ENCODE measurements at regions of chr1 and their contacts with region 1.

Region 1: GRCh38 chr1:60425528-60425927 is 352.0 kb upstream of the C1orf87 start:
- DNase-seq: peak; percentile 13
- H3K4me3 ChIP-seq: no peak overlapping the region
- H3K27ac ChIP-seq: no peak overlapping the region
- H3K4me1 ChIP-seq: peaks cover 12% of the 10 kb centered on the region
- H3K27me3 ChIP-seq: no peaks in the 10 kb centered on the region
- CTCF ChIP-seq: peak; percentile 34 to 53
- POLR2A ChIP-seq: no peak

Region 2: DNA sequence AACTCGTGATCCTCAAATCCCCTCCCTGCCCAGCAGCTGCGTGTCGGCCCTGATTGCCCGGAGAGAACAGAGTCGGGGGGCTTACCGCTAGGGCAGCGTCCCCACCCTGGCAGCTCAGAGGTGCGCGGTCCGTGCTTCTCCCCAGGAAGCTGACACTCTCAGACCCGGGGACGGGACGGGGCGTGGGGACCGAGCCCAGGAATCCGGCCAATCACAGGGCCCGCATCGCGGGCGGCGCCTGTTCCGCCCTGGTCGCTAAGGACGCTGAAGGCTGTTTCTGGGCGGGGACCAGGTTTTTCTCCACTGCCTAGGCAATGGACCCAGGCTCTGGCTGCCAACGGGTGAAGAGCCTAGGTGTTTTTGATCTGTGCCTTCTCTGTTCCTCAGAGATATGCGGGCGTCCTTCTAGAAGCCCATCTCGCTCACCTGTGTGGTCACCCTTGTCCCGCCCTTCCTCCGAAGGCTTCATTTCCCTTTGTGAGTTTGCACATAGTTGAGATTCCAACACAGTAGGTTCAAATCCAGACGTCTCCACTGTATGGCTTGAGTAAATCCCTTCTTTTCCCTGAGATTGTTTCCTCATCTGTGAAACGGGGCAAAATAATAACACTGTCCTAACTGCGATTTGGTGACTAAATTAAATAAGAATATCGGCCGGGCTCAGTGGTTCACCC is 351.8 kb before region 1 on chr1 and contains the start of gene C1orf87:
- CTCF ChIA-PET with region 1: no interaction called
- POLR2A ChIA-PET with region 1: no interaction called
- dilution Hi-C with region 1: no loop called
- intact Hi-C with region 1: no loop called
- DNase-seq: no peak
- H3K4me3 ChIP-seq: no peak within 1 kb of the TSS
- H3K27ac ChIP-seq: no peak within 1 kb of the TSS
- H3K4me1 ChIP-seq: no peaks in the 10 kb centered on the region
- H3K27me3 ChIP-seq: peaks cover 21 to 24% of the 10 kb centered on the region in 2 experiments
- CTCF ChIP-seq: no peak
- POLR2A ChIP-seq: no peak
- total RNA-seq, gene C1orf87: not detected in 2 replicates

Region 3: GRCh38 chr1:60436186-60436585 is 10.7 kb after region 1 on chr1:
- CTCF ChIA-PET with region 1: interaction called, 11 read pairs
- POLR2A ChIA-PET with region 1: no interaction called
- dilution Hi-C with region 1: no loop called
- intact Hi-C with region 1: no loop called
- DNase-seq: no peak
- H3K4me3 ChIP-seq: no peak overlapping the region
- H3K27ac ChIP-seq: no peak overlapping the region
- H3K4me1 ChIP-seq: no peaks in the 10 kb centered on the region
- H3K27me3 ChIP-seq: no peaks in the 10 kb centered on the region
- CTCF ChIP-seq: no peak
- POLR2A ChIP-seq: no peak

Region 4: DNA sequence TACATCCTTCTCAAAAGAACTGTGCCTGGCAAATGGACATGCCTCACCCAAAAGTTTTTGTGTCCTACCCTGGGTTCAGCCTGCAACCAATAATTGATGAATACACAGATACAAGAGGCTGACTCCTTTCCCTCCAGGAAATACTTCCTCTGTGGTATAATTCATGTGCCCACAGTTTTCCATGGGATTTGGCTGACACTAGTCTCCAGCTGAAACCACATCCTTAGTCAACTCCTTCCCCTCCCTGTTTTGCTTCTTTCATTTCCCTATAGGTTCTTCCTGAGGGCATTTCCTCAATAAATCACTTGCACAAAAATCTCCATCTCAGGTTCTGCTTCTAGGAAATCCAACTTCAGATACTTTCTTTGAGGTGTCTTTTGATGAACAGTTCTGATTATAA is 84.6 kb after region 1 on chr1:
- CTCF ChIA-PET with region 1: no interaction called
- POLR2A ChIA-PET with region 1: no interaction called
- dilution Hi-C with region 1: no loop called
- intact Hi-C with region 1: loop called (anchors 5 kb)
- DNase-seq: peak; percentile 89
- H3K4me3 ChIP-seq: no peak overlapping the region
- H3K27ac ChIP-seq: peak overlapping the region; percentile 13
- H3K4me1 ChIP-seq: peaks cover 28% of the 10 kb centered on the region
- H3K27me3 ChIP-seq: no peaks in the 10 kb centered on the region
- CTCF ChIP-seq: no peak
- POLR2A ChIP-seq: peak; percentile 79

Region 5: DNA sequence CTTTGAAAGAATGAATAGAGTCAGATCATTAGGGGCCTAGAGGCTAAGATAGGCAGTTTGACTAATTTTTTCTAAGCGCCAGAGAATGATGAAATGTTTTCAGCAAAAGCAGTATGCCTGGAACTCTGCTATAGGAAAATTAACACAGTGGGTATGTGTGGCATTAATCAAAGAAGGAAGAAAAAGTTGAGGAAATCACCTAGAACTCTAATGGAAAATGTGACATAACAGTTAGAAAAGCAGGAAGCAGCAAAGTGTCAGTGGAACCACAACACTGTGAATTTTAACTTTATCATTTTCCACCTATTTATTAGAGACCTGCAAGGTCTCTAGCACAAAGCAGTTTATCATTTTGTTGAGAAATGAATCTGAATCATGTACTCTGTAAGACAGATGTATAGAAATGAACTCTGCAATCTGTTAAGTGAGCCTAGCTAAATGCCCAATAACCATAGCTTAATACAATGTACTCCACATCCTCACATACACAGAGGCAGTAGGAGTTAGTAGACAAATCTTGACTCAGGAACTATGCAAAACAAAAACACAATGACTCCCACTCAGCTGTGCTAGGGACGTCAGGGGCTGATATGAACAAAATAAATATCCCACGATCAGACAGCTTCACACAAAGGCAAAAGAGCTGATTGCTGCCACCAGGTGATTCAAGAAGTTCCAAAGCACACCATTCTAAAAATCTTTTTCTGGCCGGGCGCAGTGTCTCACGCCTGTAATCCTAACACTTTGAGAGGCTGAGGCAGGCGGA is 156.1 kb after region 1 on chr1:
- CTCF ChIA-PET with region 1: no interaction called
- POLR2A ChIA-PET with region 1: no interaction called
- dilution Hi-C with region 1: no loop called
- intact Hi-C with region 1: loop called (anchors 5 kb)
- DNase-seq: peak; percentile 69
- H3K4me3 ChIP-seq: no peak overlapping the region
- H3K27ac ChIP-seq: no peak overlapping the region
- H3K4me1 ChIP-seq: no peaks in the 10 kb centered on the region
- H3K27me3 ChIP-seq: no peaks in the 10 kb centered on the region
- CTCF ChIP-seq: no peak
- POLR2A ChIP-seq: no peak